ENCODE measurements at regions of chr2 and their contacts with region 1.

Region 1: DNA sequence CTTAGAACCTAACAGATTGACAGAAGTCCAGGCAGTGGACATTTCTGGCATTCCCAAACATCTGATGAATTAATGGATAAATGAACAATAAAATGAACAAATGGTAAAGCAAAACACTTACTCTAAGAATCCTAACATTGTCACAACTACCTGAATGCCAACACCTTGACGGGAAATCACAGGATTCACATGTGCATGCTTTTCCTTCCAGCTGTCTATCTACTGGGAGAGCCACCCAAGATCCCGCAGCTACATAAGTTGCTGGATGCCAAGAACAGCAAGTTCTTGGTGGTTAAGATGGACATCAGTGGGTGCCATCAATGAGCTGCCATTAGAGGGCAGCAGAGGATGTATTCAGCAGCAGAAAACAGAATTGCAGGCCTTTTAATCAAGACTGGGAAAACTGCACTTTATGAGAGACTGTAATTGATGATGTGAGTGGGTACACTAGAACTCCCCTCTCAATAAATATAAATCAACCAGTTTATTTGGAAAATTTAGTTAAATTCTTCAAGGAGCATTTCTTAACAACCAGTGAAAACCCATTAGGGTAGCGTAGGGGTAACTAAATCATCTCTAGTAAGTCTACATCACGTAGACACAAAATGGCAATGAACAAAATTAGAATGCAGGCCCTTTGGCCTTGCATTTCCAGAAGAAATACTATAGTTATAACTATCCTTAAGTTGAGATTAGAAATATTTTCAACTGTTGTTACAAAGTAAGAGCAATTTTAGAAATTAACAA is 45.6 kb downstream of the SESTD1 start:
- DNase-seq: peak; percentile 58
- H3K4me3 Mint-ChIP-seq: no peak overlapping the region
- H3K27ac Mint-ChIP-seq: no peak overlapping the region
- H3K4me1 Mint-ChIP-seq: no peaks in the 10 kb centered on the region
- H3K27me3 Mint-ChIP-seq: no peaks in the 10 kb centered on the region

Region 2: GRCh38 chr2:179340668-179341067 is 121.6 kb after region 1 on chr2:
- CTCF ChIA-PET with region 1: interaction called, 4 read pairs
- POLR2A ChIA-PET with region 1: no interaction called
- intact Hi-C with region 1: loop called (anchors 1 kb)
- DNase-seq: no peak
- H3K4me3 Mint-ChIP-seq: no peak overlapping the region
- H3K27ac Mint-ChIP-seq: no peak overlapping the region
- H3K4me1 Mint-ChIP-seq: no peaks in the 10 kb centered on the region
- H3K27me3 Mint-ChIP-seq: no peaks in the 10 kb centered on the region

Region 3: GRCh38 chr2:179383975-179384374 is 165.0 kb after region 1 on chr2:
- CTCF ChIA-PET with region 1: no interaction called
- POLR2A ChIA-PET with region 1: no interaction called
- intact Hi-C with region 1: no loop called
- DNase-seq: no peak
- H3K4me3 Mint-ChIP-seq: no peak overlapping the region
- H3K27ac Mint-ChIP-seq: no peak overlapping the region
- H3K4me1 Mint-ChIP-seq: no peaks in the 10 kb centered on the region
- H3K27me3 Mint-ChIP-seq: peaks cover 3% of the 10 kb centered on the region

Region 4: DNA sequence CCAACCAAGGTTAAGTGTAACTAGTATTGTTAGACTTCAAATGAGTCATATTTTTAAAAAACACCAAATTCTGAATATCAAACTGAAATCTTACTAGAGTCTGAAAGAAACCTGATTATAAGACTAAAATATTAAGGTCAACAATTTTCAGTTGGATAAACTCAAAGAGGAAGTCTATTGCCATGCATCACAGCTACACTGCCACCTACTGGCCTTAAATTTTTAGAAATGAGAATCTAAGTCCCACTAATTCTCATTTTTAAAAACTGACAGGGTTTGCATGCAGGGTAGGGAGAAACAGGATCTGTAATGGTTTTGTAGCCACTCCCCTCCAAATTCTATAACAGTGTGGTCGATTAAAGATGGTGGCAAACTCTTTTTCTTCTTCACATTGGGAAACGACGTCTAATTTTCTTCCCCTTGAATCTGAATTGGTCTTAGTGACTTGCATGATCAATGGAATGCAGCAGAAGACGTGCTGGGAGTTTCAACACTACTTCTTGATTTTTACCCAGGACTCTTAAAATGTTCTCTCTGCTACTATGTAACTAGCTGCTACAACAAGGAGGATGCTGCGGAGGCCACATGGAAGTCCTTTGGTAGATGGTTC is 221.7 kb after region 1 on chr2:
- CTCF ChIA-PET with region 1: interaction called, 5 read pairs
- POLR2A ChIA-PET with region 1: no interaction called
- intact Hi-C with region 1: loop called (anchors 1 kb)
- DNase-seq: no peak
- H3K4me3 Mint-ChIP-seq: no peak overlapping the region
- H3K27ac Mint-ChIP-seq: no peak overlapping the region
- H3K4me1 Mint-ChIP-seq: no peaks in the 10 kb centered on the region
- H3K27me3 Mint-ChIP-seq: peaks cover 10% of the 10 kb centered on the region

Measured in activated CD4-positive, alpha-beta memory T cell treated with anti-CD3 and anti-CD28 coated beads for 36 hours (primary cell).